ENCODE measurements at regions of chr4 and their contacts with region 1.

Region 1: GRCh38 chr4:152545088-152545487 is 9.2 kb upstream of the FBXW7 start:
- H3K4me3 ChIP-seq: no peak overlapping the region
- H3K27ac ChIP-seq: no peak overlapping the region
- H3K4me1 ChIP-seq: no peaks in the 10 kb centered on the region
- CTCF ChIP-seq: no peak

Region 2: GRCh38 chr4:151824656-151825055 is 720.4 kb before region 1 on chr4:
- CTCF ChIA-PET with region 1: no interaction called
- POLR2A ChIA-PET with region 1: interaction called, 15 read pairs
- H3K4me3 ChIP-seq: no peak overlapping the region
- H3K27ac ChIP-seq: no peak overlapping the region
- H3K4me1 ChIP-seq: no peaks in the 10 kb centered on the region
- CTCF ChIP-seq: no peak

Region 3: GRCh38 chr4:152559641-152560040 is 14.6 kb after region 1 on chr4:
- CTCF ChIA-PET with region 1: no interaction called
- POLR2A ChIA-PET with region 1: no interaction called
- H3K4me3 ChIP-seq: no peak overlapping the region
- H3K27ac ChIP-seq: no peak overlapping the region
- H3K4me1 ChIP-seq: no peaks in the 10 kb centered on the region
- CTCF ChIP-seq: no peak

Region 4: DNA sequence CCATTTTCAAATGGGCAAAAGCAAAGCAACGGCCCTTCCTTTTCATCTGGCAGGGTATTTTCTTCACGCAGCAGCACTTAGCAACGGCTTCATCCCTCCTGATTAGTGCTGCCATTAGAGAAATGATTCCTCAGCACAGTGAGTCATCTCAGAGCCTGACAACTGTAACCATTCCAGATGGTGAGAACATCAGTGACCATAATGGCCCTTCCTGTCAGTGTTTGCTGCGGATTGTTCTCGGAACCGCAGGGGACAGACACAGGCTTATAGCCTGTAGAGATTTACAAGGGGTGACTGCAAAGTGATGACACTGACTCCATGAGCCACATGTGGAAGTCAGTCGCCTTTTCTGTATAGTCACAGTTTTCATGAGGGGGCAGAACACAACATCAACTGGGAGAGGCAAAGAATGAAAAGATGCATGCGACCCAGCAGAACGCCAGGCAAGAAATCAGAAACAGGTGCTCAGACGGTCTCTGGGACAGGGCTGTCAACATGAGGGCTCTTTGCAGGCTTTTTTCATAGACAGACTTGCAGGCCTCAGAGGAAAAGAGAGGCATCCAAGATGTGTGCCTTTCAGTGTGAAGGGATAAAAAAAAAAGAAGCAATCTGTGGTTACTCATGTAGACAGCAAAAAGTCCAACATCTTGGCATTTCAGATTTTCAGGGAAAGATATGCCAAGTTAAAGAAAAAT is 60.7 kb after region 1 on chr4:
- CTCF ChIA-PET with region 1: no interaction called
- POLR2A ChIA-PET with region 1: no interaction called
- H3K4me3 ChIP-seq: no peak overlapping the region
- H3K27ac ChIP-seq: no peak overlapping the region
- H3K4me1 ChIP-seq: peaks cover 2% of the 10 kb centered on the region; the same call in 1 of the 2 replicates
- CTCF ChIP-seq: no peak